ENCODE measurements at regions of chr17 and their contacts with region 1.

Region 1: GRCh38 chr17:19648475-19649406 is at the start of gene ALDH3A2:
- DNase-seq: peak; percentile 99
- H3K4me3 ChIP-seq: peak within 1 kb of the TSS; percentile 60
- H3K4me3 Mint-ChIP-seq: peak within 1 kb of the TSS; percentile 99
- H3K27ac Mint-ChIP-seq: peak within 1 kb of the TSS; percentile 99
- H3K4me1 ChIP-seq: peaks cover 60% of the 10 kb centered on the region
- H3K4me1 Mint-ChIP-seq: peaks cover 51% of the 10 kb centered on the region
- H3K27me3 ChIP-seq: no peaks in the 10 kb centered on the region
- H3K27me3 Mint-ChIP-seq: no peaks in the 10 kb centered on the region
- CTCF ChIP-seq: peak in 1 of 2 experiments; percentile 52
- total RNA-seq, gene ALDH3A2: 71.9 and 84.0 TPM in 2 replicates

Region 2: DNA sequence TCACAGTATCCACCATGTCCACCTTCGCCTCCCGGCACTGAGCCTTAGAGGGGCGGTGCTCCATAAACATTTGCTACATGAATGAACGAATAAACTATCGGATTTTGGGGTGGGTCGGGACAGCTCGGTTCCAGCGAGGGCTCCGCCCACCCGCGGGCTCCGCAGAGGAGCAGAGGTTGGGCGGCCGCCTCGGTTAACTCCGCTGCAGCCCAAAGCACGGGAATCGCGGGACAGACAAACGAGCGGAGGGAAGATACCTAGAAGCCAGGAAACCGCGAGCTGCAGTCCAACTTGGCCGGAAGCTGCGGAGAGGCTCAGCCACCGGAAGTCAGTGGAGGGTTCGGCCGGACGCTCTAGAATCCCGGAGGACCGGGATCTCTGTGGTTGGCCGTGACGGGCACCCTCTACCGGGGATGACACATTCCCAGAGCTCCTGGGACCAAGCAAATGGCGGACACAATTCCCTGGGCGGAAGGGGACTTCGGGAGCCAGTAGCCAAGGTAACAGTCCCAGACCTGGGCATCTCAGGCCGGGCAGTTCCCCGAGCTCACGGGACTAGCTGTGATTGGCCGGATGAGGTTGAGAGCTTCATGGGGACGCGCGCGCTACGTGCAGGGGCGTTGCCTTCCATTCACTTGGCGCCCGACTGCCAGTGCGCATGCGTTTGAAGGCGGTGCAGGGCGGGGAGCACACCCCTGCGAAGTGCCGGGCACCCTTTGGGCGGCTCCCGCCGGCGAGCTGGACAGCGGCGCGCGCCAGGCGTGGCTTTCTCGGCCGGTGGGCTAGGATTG is 270.9 kb before region 1 on chr17:
- CTCF ChIA-PET with region 1: interaction called, 4 read pairs
- POLR2A ChIA-PET with region 1: interaction called, 11 read pairs
- intact Hi-C with region 1: no loop called
- DNase-seq: peak; percentile 99
- H3K4me3 ChIP-seq: peak overlapping the region; percentile 80
- H3K4me3 Mint-ChIP-seq: peak overlapping the region; percentile 99
- H3K27ac Mint-ChIP-seq: peak overlapping the region; percentile 96
- H3K4me1 ChIP-seq: peaks cover 11% of the 10 kb centered on the region
- H3K4me1 Mint-ChIP-seq: peaks cover 6% of the 10 kb centered on the region
- H3K27me3 ChIP-seq: no peaks in the 10 kb centered on the region
- H3K27me3 Mint-ChIP-seq: no peaks in the 10 kb centered on the region
- CTCF ChIP-seq: peak in 1 of 2 experiments; percentile 4

Region 3: GRCh38 chr17:19513897-19514488 is 134.7 kb before region 1 on chr17:
- CTCF ChIA-PET with region 1: interaction called, 4 read pairs
- POLR2A ChIA-PET with region 1: no interaction called
- intact Hi-C with region 1: loop called (anchors 1 kb)
- DNase-seq: peak; percentile 69 to 79
- H3K4me3 ChIP-seq: no peak overlapping the region
- H3K4me3 Mint-ChIP-seq: no peak overlapping the region
- H3K27ac Mint-ChIP-seq: no peak overlapping the region
- H3K4me1 ChIP-seq: peaks cover 6% of the 10 kb centered on the region
- H3K4me1 Mint-ChIP-seq: peaks cover 7% of the 10 kb centered on the region
- H3K27me3 ChIP-seq: no peaks in the 10 kb centered on the region
- H3K27me3 Mint-ChIP-seq: no peaks in the 10 kb centered on the region
- CTCF ChIP-seq: peak; percentile 89 to 93

Region 4: DNA sequence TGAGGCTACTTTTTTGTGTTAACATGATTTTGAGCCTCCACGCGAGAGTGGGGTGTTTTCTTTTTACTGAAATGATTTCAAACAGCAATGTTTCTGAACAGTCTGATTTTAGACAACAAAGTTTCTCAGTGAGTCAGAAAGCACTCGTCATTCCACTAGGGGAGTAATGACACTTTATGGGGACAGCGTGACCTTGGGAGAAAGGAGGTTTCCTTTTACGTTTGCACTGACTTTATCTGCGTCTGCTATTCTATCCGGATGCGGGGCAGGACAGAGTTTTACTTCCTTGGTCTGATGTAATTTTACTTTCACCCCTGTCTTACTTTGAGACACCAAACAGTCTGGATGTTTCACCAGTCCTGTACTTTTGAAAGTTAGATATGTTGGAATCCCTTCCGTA is 94.4 kb before region 1 on chr17:
- CTCF ChIA-PET with region 1: no interaction called
- POLR2A ChIA-PET with region 1: no interaction called
- intact Hi-C with region 1: loop called (anchors 5 kb)
- DNase-seq: no peak
- H3K4me3 ChIP-seq: no peak overlapping the region
- H3K4me3 Mint-ChIP-seq: no peak overlapping the region
- H3K27ac Mint-ChIP-seq: no peak overlapping the region
- H3K4me1 ChIP-seq: peaks cover 21% of the 10 kb centered on the region
- H3K4me1 Mint-ChIP-seq: peaks cover 8% of the 10 kb centered on the region
- H3K27me3 ChIP-seq: no peaks in the 10 kb centered on the region; the same call in 1 of the 2 replicates
- H3K27me3 Mint-ChIP-seq: no peaks in the 10 kb centered on the region
- CTCF ChIP-seq: no peak

Region 5: GRCh38 chr17:19672009-19672750 is 23.4 kb after region 1 on chr17:
- CTCF ChIA-PET with region 1: interaction called, 70 read pairs
- POLR2A ChIA-PET with region 1: interaction called, 36 read pairs
- intact Hi-C with region 1: loop called (anchors 1 kb)
- DNase-seq: peak; percentile 75 to 80
- H3K4me3 ChIP-seq: no peak overlapping the region
- H3K4me3 Mint-ChIP-seq: peak overlapping the region; percentile 51
- H3K27ac Mint-ChIP-seq: peak overlapping the region; percentile 70
- H3K4me1 ChIP-seq: peaks cover 36% of the 10 kb centered on the region
- H3K4me1 Mint-ChIP-seq: peaks cover 35% of the 10 kb centered on the region
- H3K27me3 ChIP-seq: no peaks in the 10 kb centered on the region
- H3K27me3 Mint-ChIP-seq: no peaks in the 10 kb centered on the region
- CTCF ChIP-seq: peak; percentile 41 to 54

Region 6: GRCh38 chr17:19766422-19767270 is 117.9 kb after region 1 on chr17:
- CTCF ChIA-PET with region 1: interaction called, 20 read pairs
- POLR2A ChIA-PET with region 1: interaction called, 5 read pairs
- intact Hi-C with region 1: loop called (anchors 1 kb)
- DNase-seq: peak; percentile 77 to 90
- H3K4me3 ChIP-seq: no peak overlapping the region
- H3K4me3 Mint-ChIP-seq: no peak overlapping the region
- H3K27ac Mint-ChIP-seq: no peak overlapping the region
- H3K4me1 ChIP-seq: 0 out of 2 replicates have a peak, but pooled peaks cover 7% of the 10 kb centered on the region
- H3K4me1 Mint-ChIP-seq: no peaks in the 10 kb centered on the region
- H3K27me3 ChIP-seq: no peaks in the 10 kb centered on the region
- H3K27me3 Mint-ChIP-seq: no peaks in the 10 kb centered on the region
- CTCF ChIP-seq: peak; percentile 97 to 99

Measured in Caco-2 (cell line).